ENCODE measurements at regions of chr6 and their contacts with region 1.

Region 1: DNA sequence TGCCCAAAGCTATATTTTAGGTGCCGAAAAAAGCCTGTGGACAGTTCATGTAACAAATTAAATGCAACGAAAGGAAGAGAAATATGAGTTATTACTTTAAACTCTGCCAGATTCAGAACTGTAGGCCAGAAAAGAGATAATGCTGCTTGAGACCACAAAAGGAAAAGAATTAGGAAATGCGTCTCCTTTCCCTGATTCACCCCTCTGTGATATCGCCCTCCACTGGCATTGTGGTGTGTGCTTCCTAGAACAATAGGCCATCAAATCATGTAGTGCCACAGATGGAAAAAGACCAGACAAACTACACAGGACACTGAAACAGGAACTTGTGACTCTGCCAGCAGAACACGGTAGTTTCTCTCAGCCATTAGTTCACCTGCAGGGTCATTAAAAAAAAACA is 14.7 kb upstream of the LAMA4 start:
- DNase-seq: no peak
- CTCF ChIP-seq: no peak

Region 2: DNA sequence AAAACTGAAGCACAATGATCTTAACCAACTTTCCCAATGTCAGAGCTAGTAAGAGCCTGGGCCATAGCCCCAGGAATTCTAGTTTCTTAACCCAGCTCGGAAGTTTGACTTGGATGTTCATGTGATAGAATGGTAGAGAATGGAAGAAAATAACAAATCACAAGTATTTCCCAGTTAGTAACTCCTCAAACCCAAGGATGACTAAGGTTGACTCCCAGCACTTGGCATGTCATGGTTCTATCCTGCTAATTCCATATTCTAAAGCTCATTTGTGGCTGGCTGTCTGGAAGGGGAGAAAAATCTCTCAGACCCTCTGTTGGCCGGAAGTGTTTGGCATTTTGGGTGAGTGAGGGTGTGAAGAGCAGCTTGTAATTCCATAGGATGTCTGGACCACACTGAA is 326.7 kb after region 1 on chr6:
- CTCF ChIA-PET with region 1: no interaction called
- POLR2A ChIA-PET with region 1: interaction called, 11 read pairs
- DNase-seq: no peak
- CTCF ChIP-seq: no peak